Activated CD4-positive, alpha-beta T cell treated with anti-CD3 and anti-CD28 coated beads, Interleukin-2, amount 10 ng/mL, durations not matched to agents 24 days and 14 days (primary cell): ENCODE measurements at regions of chr3 and their contacts with region 1.

Region 1: DNA sequence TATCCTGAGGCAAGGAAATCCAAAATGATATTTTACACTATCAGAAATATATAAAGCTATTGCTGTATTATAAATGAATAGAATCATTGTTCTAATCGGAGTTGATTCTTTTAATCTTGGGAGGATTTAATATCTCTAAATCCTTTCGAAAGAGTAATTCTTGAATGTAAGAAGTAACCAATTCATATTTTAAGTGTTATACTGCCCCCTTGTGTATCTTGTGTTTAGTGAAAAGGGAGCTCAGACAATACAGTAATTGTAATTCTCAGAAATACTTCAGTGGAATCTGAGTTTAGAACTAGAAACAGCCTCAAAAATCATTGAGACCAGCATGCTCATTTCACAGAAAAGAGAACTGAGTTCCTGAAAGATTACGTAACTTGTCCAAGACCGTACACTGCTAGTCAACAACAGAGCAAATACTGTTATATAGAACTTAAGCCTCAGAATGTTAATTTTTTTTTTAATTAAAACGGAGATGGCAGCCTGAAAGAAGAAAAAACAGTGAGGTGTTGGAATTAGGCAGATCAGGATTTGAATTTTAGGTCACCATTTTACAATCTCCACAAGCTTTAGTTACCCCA is 42.9 kb downstream of the PLCH1 start:
- DNase-seq: no peak
- H3K4me3 Mint-ChIP-seq: no peak overlapping the region
- H3K27ac Mint-ChIP-seq: no peak overlapping the region
- H3K4me1 Mint-ChIP-seq: no peaks in the 10 kb centered on the region
- H3K27me3 Mint-ChIP-seq: peaks cover 15% of the 10 kb centered on the region

Region 2: GRCh38 chr3:154334973-154335420 is 1367.0 kb before region 1 on chr3:
- intact Hi-C with region 1: loop called (anchors 1 kb)
- DNase-seq: no peak
- H3K4me3 Mint-ChIP-seq: no peak overlapping the region
- H3K27ac Mint-ChIP-seq: no peak overlapping the region
- H3K4me1 Mint-ChIP-seq: no peaks in the 10 kb centered on the region
- H3K27me3 Mint-ChIP-seq: peaks cover 32% of the 10 kb centered on the region

Region 3: GRCh38 chr3:155352900-155353490 is 349.0 kb before region 1 on chr3:
- intact Hi-C with region 1: loop called (anchors 1 kb)
- DNase-seq: no peak
- H3K4me3 Mint-ChIP-seq: no peak overlapping the region
- H3K27ac Mint-ChIP-seq: no peak overlapping the region
- H3K4me1 Mint-ChIP-seq: no peaks in the 10 kb centered on the region
- H3K27me3 Mint-ChIP-seq: peaks cover 2% of the 10 kb centered on the region

Region 4: DNA sequence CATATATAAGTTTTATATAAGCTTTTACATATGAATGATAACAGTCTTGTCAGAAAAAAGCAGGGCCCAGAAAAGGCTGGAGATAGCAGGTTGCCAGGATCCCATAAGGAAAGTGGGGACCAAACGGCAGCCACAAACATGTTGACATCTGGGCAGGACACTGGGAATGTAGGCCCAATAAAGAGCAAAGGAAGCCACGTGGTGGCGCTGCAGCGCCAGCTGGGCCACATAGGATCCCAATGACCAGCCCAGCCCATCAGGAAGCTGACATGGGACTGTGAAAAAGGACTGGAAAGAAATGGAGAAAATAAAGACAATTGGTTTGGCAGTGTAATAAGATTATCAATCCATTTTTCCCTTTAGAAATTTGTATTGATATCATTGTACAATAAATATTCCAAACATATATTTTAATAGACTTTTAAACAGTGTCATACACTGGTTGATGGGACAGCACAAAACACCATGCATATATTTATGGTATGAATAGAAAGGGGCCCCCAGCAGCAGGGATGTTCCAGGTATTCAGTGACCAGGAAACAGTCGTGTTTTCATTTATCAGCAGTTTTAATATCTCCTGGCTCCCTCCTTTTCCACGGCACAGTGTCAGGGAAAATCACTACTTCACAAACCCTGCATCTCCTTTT is 319.5 kb before region 1 on chr3:
- intact Hi-C with region 1: loop called (anchors 1 kb)
- DNase-seq: no peak
- H3K4me3 Mint-ChIP-seq: no peak overlapping the region
- H3K27ac Mint-ChIP-seq: no peak overlapping the region
- H3K4me1 Mint-ChIP-seq: no peaks in the 10 kb centered on the region
- H3K27me3 Mint-ChIP-seq: peaks cover 3% of the 10 kb centered on the region